Heart left ventricle (tissue), 16 donors: ENCODE measurements at regions of chr3 and their contacts with region 1.

Region 1: GRCh38 chr3:53130179-53131061 is at the start of gene RFT1:
- DNase-seq: peak; percentile 98 to 100 (median 99)
- ATAC-seq: peak; percentile 96 to 99 (median 97)
- H3K4me3 ChIP-seq: peak within 1 kb of the TSS; percentile 74 to 99 (median 84)
- H3K27ac ChIP-seq: peak within 1 kb of the TSS; percentile 71 to 96 (median 92)
- H3K4me1 ChIP-seq: peaks cover 0 to 36% (median 21%) of the 10 kb centered on the region in 12 donors
- H3K27me3 ChIP-seq: no peaks in the 10 kb centered on the region
- CTCF ChIP-seq: peak in 5 of 12 donors; percentile 6 to 40 (median 21)
- POLR2A ChIP-seq: peak in 1 of 2 donors; percentile 67
- total RNA-seq, gene RFT1: 5.4 to 16.2 (median 8.8) TPM

Region 2: GRCh38 chr3:53160660-53161449 is 30.4 kb after region 1 on chr3 and contains the start of gene PRKCD:
- intact Hi-C with region 1: loop called in 6 of 10 experiments (anchors 1 to 5 kb)
- DNase-seq: peak; percentile 86 to 92 (median 89)
- ATAC-seq: peak; percentile 72 to 90 (median 90)
- H3K4me3 ChIP-seq: peak within 1 kb of the TSS; percentile 39 to 98 (median 88)
- H3K27ac ChIP-seq: peak within 1 kb of the TSS; percentile 11 to 92 (median 83)
- H3K4me1 ChIP-seq: peaks cover 5 to 62% (median 23%) of the 10 kb centered on the region in 12 donors
- H3K27me3 ChIP-seq: peaks cover 0 to 7% (median 0%) of the 10 kb centered on the region in 9 donors
- CTCF ChIP-seq: peak in 10 of 12 donors; percentile 21 to 61 (median 51)
- POLR2A ChIP-seq: peak in 1 of 2 donors; percentile 48
- total RNA-seq, gene PRKCD: 5.3 to 44.5 (median 11.6) TPM

Region 3: GRCh38 chr3:53195602-53196574 is 65.5 kb after region 1 on chr3:
- intact Hi-C with region 1: loop called (anchors 1 to 5 kb)
- DNase-seq: peak; percentile 46 to 76 (median 53)
- ATAC-seq: peak in 3 of 4 donors; percentile 61 to 76 (median 74)
- H3K4me3 ChIP-seq: no peak overlapping the region
- H3K27ac ChIP-seq: no peak overlapping the region
- H3K4me1 ChIP-seq: peaks cover 0 to 49% (median 22%) of the 10 kb centered on the region in 12 donors
- H3K27me3 ChIP-seq: no peaks in the 10 kb centered on the region
- CTCF ChIP-seq: peak; percentile 95 to 100 (median 99)
- POLR2A ChIP-seq: no peak

Region 4: GRCh38 chr3:53334742-53335141 is 204.3 kb after region 1 on chr3:
- intact Hi-C with region 1: no loop called
- DNase-seq: no peak
- ATAC-seq: no peak
- H3K4me3 ChIP-seq: no peak overlapping the region
- H3K27ac ChIP-seq: no peak overlapping the region
- H3K4me1 ChIP-seq: peaks cover 0 to 19% (median 13%) of the 10 kb centered on the region in 12 donors
- H3K27me3 ChIP-seq: no peaks in the 10 kb centered on the region
- CTCF ChIP-seq: no peak
- POLR2A ChIP-seq: no peak